Right cardiac atrium (tissue), 5 donors: ENCODE measurements at regions of chr12 and their contacts with region 1.

Region 1: DNA sequence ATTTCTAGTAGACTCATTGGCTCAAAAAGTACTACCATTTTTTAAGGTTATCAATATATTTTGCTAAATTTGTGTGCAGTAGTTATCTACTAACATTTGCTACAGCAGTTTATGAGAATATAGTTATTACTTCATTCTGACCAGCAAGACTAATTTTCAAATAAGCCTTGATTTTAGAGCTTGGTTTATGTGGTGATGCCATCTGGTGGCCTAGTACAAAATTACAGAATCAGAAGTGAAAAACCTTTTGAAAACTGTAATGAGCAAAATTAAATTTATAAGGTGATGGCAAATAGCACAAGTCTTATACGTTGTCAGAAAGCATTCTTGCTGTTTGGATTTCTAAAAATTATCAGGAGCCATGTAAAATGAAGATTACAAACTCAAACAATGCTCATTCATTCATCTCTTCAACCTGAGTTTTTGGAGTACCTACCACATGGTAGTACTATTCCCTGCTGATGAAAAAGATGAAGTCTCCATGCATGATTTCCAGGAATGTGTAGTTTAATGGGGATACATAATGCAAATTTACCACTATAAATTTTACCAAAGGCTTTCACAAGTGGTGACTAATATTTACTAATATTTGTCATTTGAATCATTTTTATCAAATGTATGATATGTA is 51.0 kb downstream of the MAGOHB start:
- DNase-seq: no peak
- ATAC-seq: no peak
- H3K4me3 ChIP-seq: no peak overlapping the region
- H3K27ac ChIP-seq: no peak overlapping the region
- H3K4me1 ChIP-seq: no peaks in the 10 kb centered on the region
- H3K27me3 ChIP-seq: no peaks in the 10 kb centered on the region

Region 2: GRCh38 chr12:10235761-10236631 is 326.4 kb before region 1 on chr12:
- intact Hi-C with region 1: loop called (anchors 2 to 5 kb)
- DNase-seq: peak in 1 of 3 donors; percentile 52
- ATAC-seq: peak; percentile 80 to 84
- H3K4me3 ChIP-seq: no peak overlapping the region
- H3K27ac ChIP-seq: no peak overlapping the region
- H3K4me1 ChIP-seq: no peaks in the 10 kb centered on the region
- H3K27me3 ChIP-seq: no peaks in the 10 kb centered on the region

Region 3: GRCh38 chr12:10320643-10321042 is 241.8 kb before region 1 on chr12:
- intact Hi-C with region 1: loop called in 2 of 4 experiments (anchors 10 kb)
- DNase-seq: no peak
- ATAC-seq: no peak
- H3K4me3 ChIP-seq: no peak overlapping the region
- H3K27ac ChIP-seq: no peak overlapping the region
- H3K4me1 ChIP-seq: no peaks in the 10 kb centered on the region
- H3K27me3 ChIP-seq: no peaks in the 10 kb centered on the region

Region 4: GRCh38 chr12:10331642-10332239 is 230.7 kb before region 1 on chr12:
- intact Hi-C with region 1: loop called (anchors 5 to 10 kb)
- DNase-seq: no peak
- ATAC-seq: peak; percentile 76 to 83
- H3K4me3 ChIP-seq: no peak overlapping the region
- H3K27ac ChIP-seq: no peak overlapping the region
- H3K4me1 ChIP-seq: no peaks in the 10 kb centered on the region
- H3K27me3 ChIP-seq: no peaks in the 10 kb centered on the region

Region 5: GRCh38 chr12:10409387-10409786 is 153.0 kb before region 1 on chr12 and contains the start of gene KLRC4:
- intact Hi-C with region 1: no loop called
- DNase-seq: no peak
- ATAC-seq: no peak
- H3K4me3 ChIP-seq: no peak within 1 kb of the TSS
- H3K27ac ChIP-seq: no peak within 1 kb of the TSS
- H3K4me1 ChIP-seq: no peaks in the 10 kb centered on the region
- H3K27me3 ChIP-seq: no peaks in the 10 kb centered on the region
- total RNA-seq, gene KLRC4: not detected